Caco-2 (cell line): ENCODE measurements at regions of chr2 and their contacts with region 1.

Region 1: DNA sequence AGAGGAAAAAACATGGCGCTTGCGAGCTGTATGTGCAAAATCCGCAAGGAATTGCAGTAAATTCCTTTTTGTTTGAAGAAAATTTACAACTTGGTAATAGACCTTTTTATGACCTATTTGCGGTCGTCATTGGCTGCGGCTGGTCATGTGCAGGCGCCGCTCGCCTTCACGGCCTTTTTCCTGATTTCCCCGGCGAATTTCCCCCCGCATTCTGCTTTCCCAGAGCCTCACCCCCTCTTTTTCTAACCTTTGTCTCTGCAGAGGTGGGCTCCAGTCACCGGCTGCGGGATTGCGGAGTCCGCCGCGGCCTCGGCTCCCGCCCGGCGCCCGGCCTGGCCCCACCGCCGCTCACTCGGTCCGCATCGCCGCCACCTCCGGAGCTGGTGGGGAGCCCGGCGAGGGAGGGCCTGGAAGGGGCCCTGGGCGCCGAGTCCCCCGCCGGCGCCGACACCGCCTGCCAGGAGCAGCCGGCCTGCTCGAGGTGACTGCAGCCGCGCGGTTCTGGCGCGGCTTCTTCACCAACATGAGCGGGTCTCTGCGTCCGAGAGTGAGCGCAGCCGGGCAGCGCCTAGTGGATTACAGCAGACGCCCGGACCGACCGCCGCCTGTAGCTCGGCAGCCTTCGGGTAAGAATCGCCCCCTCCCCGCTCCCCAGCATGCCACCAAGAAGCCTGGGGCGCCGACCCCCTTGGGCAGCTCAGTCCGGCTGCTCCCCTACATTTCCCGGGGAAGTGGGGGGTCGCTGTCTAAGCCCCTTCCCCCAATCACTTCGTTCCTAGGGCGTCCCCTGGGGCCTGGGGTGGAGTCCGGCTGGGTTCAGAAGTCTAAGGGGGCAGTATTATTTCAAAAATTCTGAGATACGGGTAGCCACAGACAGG is 7.1 kb downstream of the HOXD8 start:
- DNase-seq: peak; percentile 52 to 53
- H3K4me3 ChIP-seq: peak overlapping the region; percentile 52
- H3K4me3 Mint-ChIP-seq: peak overlapping the region; percentile 76
- H3K27ac Mint-ChIP-seq: no peak overlapping the region
- H3K4me1 ChIP-seq: peaks cover 14% of the 10 kb centered on the region; the same call in 1 of the 2 replicates
- H3K4me1 Mint-ChIP-seq: peaks cover 13% of the 10 kb centered on the region
- H3K27me3 ChIP-seq: peaks cover 4% of the 10 kb centered on the region
- H3K27me3 Mint-ChIP-seq: peaks cover 49% of the 10 kb centered on the region
- CTCF ChIP-seq: no peak

Region 2: DNA sequence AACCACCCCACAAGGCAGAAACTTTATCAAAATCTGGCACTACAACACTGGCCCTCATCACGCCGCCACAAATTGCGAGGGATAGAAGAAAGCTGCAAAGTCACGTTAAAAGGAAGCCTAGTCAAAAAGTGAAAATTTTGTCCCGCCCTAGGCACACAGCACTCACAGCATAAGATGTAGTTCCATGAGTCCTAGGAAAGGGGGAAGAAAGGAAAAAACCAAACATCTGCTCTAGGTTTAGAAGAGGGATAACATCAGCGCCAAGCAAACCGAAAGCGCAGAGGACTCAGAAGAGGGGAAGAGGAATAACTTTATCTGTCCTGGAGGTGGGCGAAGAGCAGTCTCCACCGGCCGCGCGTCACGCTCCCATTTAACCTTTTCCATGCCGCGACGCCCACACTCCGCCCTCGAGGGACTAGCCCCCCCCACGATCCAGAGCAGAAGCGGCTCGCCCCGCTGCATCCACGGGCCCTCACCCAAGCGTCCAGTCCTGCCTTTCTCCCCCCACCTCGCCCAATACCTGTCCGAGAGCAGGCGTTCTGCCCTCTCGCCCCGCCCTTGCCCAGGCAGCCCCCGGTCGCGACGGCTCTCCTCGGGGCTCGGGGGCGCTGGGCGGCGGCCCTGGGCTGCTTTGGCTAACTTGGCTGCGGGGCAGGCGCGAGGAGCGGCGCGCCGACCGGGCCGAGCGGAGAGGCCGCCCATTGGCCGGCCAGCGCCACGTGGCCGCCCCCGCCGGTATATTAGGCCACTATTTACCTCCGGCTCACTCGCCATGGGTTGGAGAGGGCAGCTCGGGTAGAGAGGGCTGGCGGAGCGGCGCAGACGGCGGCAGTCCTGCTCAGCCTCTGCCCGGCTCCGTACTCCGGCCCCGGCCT is 51.5 kb after region 1 on chr2 and contains the start of gene HOXD1:
- CTCF ChIA-PET with region 1: no interaction called
- POLR2A ChIA-PET with region 1: no interaction called
- intact Hi-C with region 1: loop called (anchors 5 kb)
- DNase-seq: peak; percentile 51 to 58
- H3K4me3 ChIP-seq: peak within 1 kb of the TSS; percentile 56
- H3K4me3 Mint-ChIP-seq: peak within 1 kb of the TSS; percentile 78
- H3K27ac Mint-ChIP-seq: no peak within 1 kb of the TSS
- H3K4me1 ChIP-seq: peaks cover 14% of the 10 kb centered on the region
- H3K4me1 Mint-ChIP-seq: no peaks in the 10 kb centered on the region
- H3K27me3 ChIP-seq: 0 out of 2 replicates have a peak, but pooled peaks cover 3% of the 10 kb centered on the region
- H3K27me3 Mint-ChIP-seq: peaks cover 18% of the 10 kb centered on the region
- CTCF ChIP-seq: no peak
- total RNA-seq, gene HOXD1: not detected in 2 replicates